ENCODE measurements at regions of chr7 and their contacts with region 1.

Region 1: DNA sequence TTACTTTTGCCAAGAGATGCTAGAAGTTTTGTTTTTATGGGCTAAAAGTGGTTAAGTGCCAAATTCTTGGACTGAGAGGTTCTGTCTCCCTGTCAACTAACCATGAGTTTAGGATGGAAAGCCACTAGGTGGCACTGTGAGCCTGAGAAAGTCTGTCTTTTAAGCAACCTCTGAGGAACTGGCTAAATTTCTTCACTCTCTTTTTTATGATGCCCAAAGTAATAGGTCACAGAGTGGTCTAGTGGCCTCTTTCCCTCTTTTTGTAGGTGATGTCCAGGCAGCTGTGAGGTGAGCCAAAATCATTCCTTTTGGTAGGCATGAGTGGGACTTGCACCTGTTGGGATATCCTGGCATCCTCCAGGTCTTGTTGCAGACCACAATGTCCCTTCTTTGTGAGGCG is 56.8 kb downstream of the SND1 start:
- DNase-seq: peak; percentile 61
- H3K4me3 ChIP-seq: no peak overlapping the region
- H3K27ac ChIP-seq: peak overlapping the region in 1 of 2 experiments; percentile 82; a peak in 3 of 4 replicates
- H3K4me1 ChIP-seq: peaks cover 10 to 17% of the 10 kb centered on the region in 2 experiments
- H3K27me3 ChIP-seq: no peaks in the 10 kb centered on the region
- CTCF ChIP-seq: peak; percentile 96
- EP300 ChIP-seq: no peak
- RAD21 ChIP-seq: peak; percentile 99

Region 2: DNA sequence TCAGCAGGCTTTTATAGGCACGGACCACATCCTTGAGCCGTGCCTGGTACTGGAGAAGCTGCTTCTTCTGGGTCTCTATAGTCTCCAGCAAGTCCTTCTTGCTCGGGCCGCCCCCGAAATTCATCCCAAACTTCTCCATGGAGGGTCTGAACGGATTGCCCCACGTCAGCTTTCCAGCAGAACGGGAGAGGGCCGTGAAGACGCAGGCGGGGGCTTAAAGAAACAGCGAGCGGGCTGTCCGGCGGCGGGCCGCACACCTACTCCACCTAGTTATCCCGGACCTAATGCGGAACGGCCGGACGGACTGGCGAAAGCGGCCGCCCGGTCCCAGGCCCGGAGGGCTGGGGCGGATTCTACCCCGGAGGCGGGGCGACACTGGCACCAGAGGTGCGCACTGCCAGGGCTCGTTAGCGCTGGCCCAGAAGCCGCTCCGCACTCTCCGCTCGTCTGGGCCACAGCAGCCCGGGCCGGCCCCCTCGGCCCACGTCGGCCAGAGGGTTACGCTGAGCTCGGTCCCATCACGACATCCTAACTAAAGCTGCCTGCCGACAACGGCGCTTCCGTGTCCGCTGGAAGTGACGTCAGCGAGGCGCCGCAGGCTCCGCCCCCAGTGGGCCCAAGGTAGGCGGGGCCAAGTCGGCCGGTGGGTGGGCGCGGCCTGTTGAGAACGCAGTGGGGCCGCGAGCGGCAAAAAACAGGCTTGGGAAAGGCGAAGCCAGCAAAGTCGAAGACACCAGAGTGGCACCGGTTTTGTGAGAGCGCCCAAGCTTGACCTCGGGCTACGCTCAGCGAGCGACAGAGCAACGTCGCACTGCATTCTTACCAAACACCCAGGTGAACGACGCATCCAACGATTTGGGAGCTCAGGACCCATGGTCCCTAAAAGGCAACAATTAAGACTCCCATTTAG is 123.5 kb before region 1 on chr7 and contains the start of gene GCC1:
- CTCF ChIA-PET with region 1: interaction called, 10 read pairs
- POLR2A ChIA-PET with region 1: no interaction called
- DNase-seq: peak; percentile 99
- H3K4me3 ChIP-seq: peak within 1 kb of the TSS; percentile 95 to 100
- H3K27ac ChIP-seq: peak within 1 kb of the TSS; percentile 67 to 77
- H3K4me1 ChIP-seq: peaks cover 10 to 59% of the 10 kb centered on the region in 2 experiments; a peak in 3 of 4 replicates
- H3K27me3 ChIP-seq: no peaks in the 10 kb centered on the region
- CTCF ChIP-seq: no peak
- EP300 ChIP-seq: peak in 1 of 2 experiments; percentile 20; a peak in 1 of 4 replicates
- RAD21 ChIP-seq: no peak
- polyA plus RNA-seq, gene GCC1: 8.4 and 10.3 TPM in 2 replicates

Region 3: DNA sequence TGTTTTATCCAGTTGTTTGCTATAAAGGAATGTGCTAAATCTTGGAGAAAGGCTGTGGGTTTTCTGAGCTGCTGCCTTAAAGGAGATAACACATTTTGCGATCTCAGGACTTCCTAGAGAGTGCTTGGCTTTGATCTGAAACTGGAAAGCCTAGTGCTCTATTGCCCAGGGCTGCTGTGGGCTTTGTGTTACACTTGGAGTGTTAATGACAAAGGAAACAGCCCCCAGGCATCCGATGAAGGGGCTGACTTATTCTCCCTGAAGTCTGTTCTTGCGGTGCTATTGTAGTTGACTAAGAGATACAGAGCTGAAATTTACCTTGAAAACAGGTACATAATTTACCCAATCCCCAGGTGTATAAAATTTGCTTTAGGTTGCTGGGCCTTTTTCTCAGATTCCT is 17.7 kb after region 1 on chr7:
- CTCF ChIA-PET with region 1: interaction called, 47 read pairs
- POLR2A ChIA-PET with region 1: no interaction called
- DNase-seq: no peak
- H3K4me3 ChIP-seq: no peak overlapping the region
- H3K27ac ChIP-seq: no peak overlapping the region
- H3K4me1 ChIP-seq: peaks cover 0 to 10% of the 10 kb centered on the region in 2 experiments; a peak in 2 of 4 replicates
- H3K27me3 ChIP-seq: no peaks in the 10 kb centered on the region
- CTCF ChIP-seq: no peak
- EP300 ChIP-seq: no peak
- RAD21 ChIP-seq: no peak

Region 4: DNA sequence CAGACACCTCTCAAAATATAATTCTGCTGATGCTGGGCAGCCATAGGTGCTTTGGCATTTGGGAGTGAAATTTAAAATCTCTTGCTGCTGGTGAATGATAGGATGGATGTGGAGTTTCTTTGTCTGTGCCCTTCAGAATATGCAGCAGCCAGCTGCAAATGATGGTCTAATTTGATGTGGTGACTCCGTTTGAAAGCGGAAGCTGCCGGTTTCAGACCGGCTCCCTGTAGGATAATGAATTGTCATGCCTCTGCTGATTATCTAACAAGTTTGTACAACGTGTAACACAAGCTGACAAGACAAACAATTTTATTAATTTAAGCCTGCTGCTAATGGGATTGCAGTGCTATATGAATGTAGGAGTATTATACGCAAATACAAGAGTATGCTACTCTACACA is 46.7 kb after region 1 on chr7:
- CTCF ChIA-PET with region 1: interaction called, 13 read pairs
- POLR2A ChIA-PET with region 1: no interaction called
- DNase-seq: peak; percentile 52
- H3K4me3 ChIP-seq: no peak overlapping the region
- H3K27ac ChIP-seq: peak overlapping the region in 1 of 2 experiments; percentile 85; a peak in 2 of 4 replicates
- H3K4me1 ChIP-seq: peaks cover 7 to 25% of the 10 kb centered on the region in 2 experiments; a peak in 3 of 4 replicates
- H3K27me3 ChIP-seq: no peaks in the 10 kb centered on the region
- CTCF ChIP-seq: no peak
- EP300 ChIP-seq: peak in 1 of 2 experiments; percentile 34; a peak in 1 of 4 replicates
- RAD21 ChIP-seq: peak; percentile 12; the same call in 1 of the 2 replicates

Region 5: GRCh38 chr7:127959770-127960169 is 251.0 kb after region 1 on chr7:
- CTCF ChIA-PET with region 1: interaction called, 10 read pairs
- POLR2A ChIA-PET with region 1: no interaction called
- DNase-seq: no peak
- H3K4me3 ChIP-seq: no peak overlapping the region
- H3K27ac ChIP-seq: no peak overlapping the region
- H3K4me1 ChIP-seq: peaks cover 0 to 19% of the 10 kb centered on the region in 2 experiments; a peak in 1 of 4 replicates
- H3K27me3 ChIP-seq: no peaks in the 10 kb centered on the region
- CTCF ChIP-seq: no peak
- EP300 ChIP-seq: no peak
- RAD21 ChIP-seq: no peak

Region 6: GRCh38 chr7:128020159-128020558 is 311.4 kb after region 1 on chr7:
- CTCF ChIA-PET with region 1: interaction called, 18 read pairs
- POLR2A ChIA-PET with region 1: no interaction called
- DNase-seq: peak; percentile 32
- H3K4me3 ChIP-seq: no peak overlapping the region; a peak in 1 of 4 replicates
- H3K27ac ChIP-seq: no peak overlapping the region
- H3K4me1 ChIP-seq: peaks cover 35 to 61% of the 10 kb centered on the region in 2 experiments
- H3K27me3 ChIP-seq: no peaks in the 10 kb centered on the region
- CTCF ChIP-seq: peak; percentile 63
- EP300 ChIP-seq: no peak
- RAD21 ChIP-seq: 0 out of 2 replicates have a peak, but pooled peaks have one; percentile 22

Region 7: DNA sequence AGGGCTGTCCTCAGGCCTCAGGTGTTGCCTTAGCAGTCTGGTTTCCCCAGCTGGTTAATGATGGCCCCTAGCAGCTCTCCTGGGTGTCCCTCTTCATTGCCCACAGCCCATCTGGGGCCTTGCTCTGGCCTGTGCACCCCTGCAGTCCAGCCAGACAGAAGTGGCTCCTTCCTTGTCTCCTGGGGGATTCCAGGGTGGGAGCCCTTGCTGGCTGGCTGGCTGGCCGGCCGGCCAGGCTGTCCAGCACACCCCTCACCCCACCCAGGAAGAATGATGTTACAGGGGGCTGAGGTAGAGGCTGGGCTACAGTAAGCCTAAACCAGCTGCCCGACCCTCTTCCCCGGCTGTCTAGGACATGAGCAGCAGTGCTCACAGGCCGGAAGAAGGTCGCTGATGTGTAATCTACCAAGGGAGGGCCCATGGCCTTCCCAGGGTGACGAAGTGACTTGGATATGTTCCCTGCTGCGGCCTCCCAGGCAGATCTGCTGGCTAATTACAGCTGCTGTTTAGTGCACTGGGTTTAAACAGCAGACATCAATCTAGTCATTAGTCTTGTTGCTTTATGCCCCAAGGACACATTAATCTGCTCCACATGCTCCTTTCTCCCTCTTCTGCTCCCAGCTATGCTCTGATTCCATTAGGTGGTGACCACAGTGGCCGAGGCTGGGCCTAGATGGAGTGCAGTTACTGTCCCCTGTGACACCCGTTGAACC is 376.3 kb after region 1 on chr7:
- CTCF ChIA-PET with region 1: interaction called, 13 read pairs
- POLR2A ChIA-PET with region 1: no interaction called
- DNase-seq: peak; percentile 96
- H3K4me3 ChIP-seq: no peak overlapping the region
- H3K27ac ChIP-seq: peak overlapping the region; percentile 51 to 99; a peak in 3 of 4 replicates
- H3K4me1 ChIP-seq: peaks cover 0 to 63% of the 10 kb centered on the region in 2 experiments; a peak in 2 of 4 replicates
- H3K27me3 ChIP-seq: no peaks in the 10 kb centered on the region
- CTCF ChIP-seq: no peak
- EP300 ChIP-seq: peak in 1 of 2 experiments; percentile 99; a peak in 2 of 4 replicates
- RAD21 ChIP-seq: 0 out of 2 replicates have a peak, but pooled peaks have one; percentile 18